ENCODE measurements at regions of chrX and their contacts with region 1.

Region 1: DNA sequence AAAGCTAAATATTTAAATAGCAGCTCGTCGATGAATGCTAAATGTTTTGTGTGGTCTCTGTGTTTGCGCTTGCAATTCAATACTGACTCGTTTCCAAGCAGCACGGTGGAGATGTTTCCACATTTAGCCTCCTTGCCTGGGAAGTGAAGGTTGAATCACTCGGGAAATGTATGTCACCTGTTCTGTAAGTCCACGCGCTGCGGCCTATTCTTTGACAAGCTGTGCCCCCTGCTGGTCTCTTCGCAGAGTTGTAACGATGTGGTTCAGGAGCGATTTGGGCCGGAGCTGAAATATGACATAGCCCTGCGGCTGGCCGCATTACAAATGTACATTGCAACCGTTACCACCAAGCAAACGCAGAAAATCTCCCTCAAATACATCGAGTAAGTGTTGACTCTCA is 89.6 kb upstream of the PRPS2 start:
- DNase-seq: peak; percentile 58
- H3K4me3 Mint-ChIP-seq: no peak overlapping the region
- H3K27ac Mint-ChIP-seq: no peak overlapping the region
- H3K4me1 Mint-ChIP-seq: peaks cover 2% of the 10 kb centered on the region
- H3K27me3 Mint-ChIP-seq: no peaks in the 10 kb centered on the region

Region 2: DNA sequence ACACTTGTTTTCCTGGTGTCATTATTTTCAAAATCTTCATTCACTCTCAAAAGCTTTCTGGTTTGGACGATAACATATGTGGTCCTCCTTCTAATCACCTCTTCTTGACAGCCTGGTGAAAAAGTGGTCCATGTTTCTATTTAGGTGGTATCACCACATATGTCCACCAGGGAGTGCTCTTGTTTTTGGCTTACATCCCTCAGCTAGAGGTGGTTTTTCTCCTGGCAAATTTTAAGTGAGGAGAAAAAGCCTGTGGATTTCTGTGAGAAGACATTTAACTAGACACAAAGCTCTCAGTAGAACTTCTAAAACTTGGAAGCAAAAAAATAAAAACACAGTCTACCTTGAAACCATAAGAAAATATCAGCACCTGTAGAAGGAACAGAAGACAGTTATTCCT is 621.4 kb before region 1 on chrX:
- CTCF ChIA-PET with region 1: interaction called, 4 read pairs
- intact Hi-C with region 1: loop called (anchors 2 kb)
- DNase-seq: no peak
- H3K4me3 Mint-ChIP-seq: no peak overlapping the region
- H3K27ac Mint-ChIP-seq: no peak overlapping the region
- H3K4me1 Mint-ChIP-seq: no peaks in the 10 kb centered on the region
- H3K27me3 Mint-ChIP-seq: peaks cover 2% of the 10 kb centered on the region

Region 3: GRCh38 chrX:12360383-12360782 is 341.2 kb before region 1 on chrX:
- CTCF ChIA-PET with region 1: no interaction called
- intact Hi-C with region 1: no loop called
- DNase-seq: no peak
- H3K4me3 Mint-ChIP-seq: no peak overlapping the region
- H3K27ac Mint-ChIP-seq: no peak overlapping the region
- H3K4me1 Mint-ChIP-seq: no peaks in the 10 kb centered on the region
- H3K27me3 Mint-ChIP-seq: no peaks in the 10 kb centered on the region

Region 4: GRCh38 chrX:12497832-12498591 is 203.6 kb before region 1 on chrX:
- CTCF ChIA-PET with region 1: no interaction called
- intact Hi-C with region 1: loop called (anchors 5 kb)
- DNase-seq: peak; percentile 6
- H3K4me3 Mint-ChIP-seq: no peak overlapping the region
- H3K27ac Mint-ChIP-seq: no peak overlapping the region
- H3K4me1 Mint-ChIP-seq: no peaks in the 10 kb centered on the region
- H3K27me3 Mint-ChIP-seq: no peaks in the 10 kb centered on the region

Region 5: DNA sequence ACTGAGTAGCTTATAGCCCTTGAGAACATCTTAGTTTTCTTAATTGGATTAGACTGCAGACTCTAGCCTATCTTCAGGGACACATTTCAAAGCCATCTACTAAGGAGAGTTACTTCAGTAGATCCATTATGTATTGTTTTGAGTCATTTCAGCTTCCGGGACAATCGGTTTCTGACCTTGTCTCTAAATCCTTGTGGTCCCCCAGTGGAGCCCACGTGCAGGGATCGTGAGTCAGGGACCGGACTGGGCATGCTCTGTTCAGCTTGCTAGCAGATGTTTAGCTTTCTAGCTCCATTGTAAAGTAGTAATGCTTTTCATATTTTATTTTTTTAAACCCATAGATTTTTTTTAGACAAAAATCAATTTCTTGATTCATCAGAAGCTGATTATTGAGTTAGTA is 122.3 kb before region 1 on chrX:
- CTCF ChIA-PET with region 1: no interaction called
- intact Hi-C with region 1: loop called (anchors 5 kb)
- DNase-seq: no peak
- H3K4me3 Mint-ChIP-seq: no peak overlapping the region
- H3K27ac Mint-ChIP-seq: no peak overlapping the region
- H3K4me1 Mint-ChIP-seq: no peaks in the 10 kb centered on the region
- H3K27me3 Mint-ChIP-seq: peaks cover 2% of the 10 kb centered on the region

Region 6: DNA sequence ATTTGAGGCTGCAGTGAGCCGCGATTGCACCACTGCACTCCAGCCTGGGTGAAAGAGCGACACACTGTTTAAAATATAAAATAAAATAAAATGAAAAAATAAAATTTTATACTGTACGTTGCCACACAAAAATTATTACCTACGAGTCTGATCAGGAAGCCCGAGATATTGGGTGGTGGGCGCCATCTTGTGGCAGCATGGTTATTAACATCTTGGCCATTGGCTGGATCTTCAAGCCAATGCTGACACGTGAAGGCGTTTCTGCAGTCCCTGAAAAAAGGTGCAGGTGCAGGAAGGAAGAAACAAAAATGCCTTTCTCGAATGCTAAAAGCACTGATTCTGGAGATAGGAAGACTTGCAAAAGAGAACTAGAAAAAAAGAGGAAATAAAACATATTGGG is 199.9 kb after region 1 on chrX:
- CTCF ChIA-PET with region 1: interaction called, 9 read pairs
- intact Hi-C with region 1: loop called (anchors 1 kb)
- DNase-seq: peak; percentile 85
- H3K4me3 Mint-ChIP-seq: no peak overlapping the region
- H3K27ac Mint-ChIP-seq: no peak overlapping the region
- H3K4me1 Mint-ChIP-seq: peaks cover 8% of the 10 kb centered on the region
- H3K27me3 Mint-ChIP-seq: no peaks in the 10 kb centered on the region